H1 (cell line): ENCODE measurements at regions of chr11 and their contacts with region 1.

Region 1: GRCh38 chr11:75532200-75533048 is 6.7 kb upstream of the GDPD5 start:
- DNase-seq: peak in 1 of 2 experiments; percentile 92
- H3K4me3 ChIP-seq: peak overlapping the region in 3 of 4 experiments; percentile 5 to 43 (median 17); a peak in 1 of 8 replicates
- H3K27ac ChIP-seq: no peak overlapping the region
- H3K4me1 ChIP-seq: peaks cover 0 to 5% (median under 1%) of the 10 kb centered on the region in 4 experiments; a peak in 1 of 7 replicates
- H3K27me3 ChIP-seq: no peaks in the 10 kb centered on the region
- CTCF ChIP-seq: peak; percentile 63 to 88 (median 87)
- EP300 ChIP-seq: no peak
- POLR2A ChIP-seq: no peak
- RAD21 ChIP-seq: peak; percentile 92 to 95

Region 2: GRCh38 chr11:75280227-75280701 is 252.2 kb before region 1 on chr11:
- CTCF ChIA-PET with region 1: interaction called, 11 read pairs
- POLR2A ChIA-PET with region 1: no interaction called
- DNase-seq: peak; percentile 76 to 92
- H3K4me3 ChIP-seq: no peak overlapping the region
- H3K27ac ChIP-seq: no peak overlapping the region
- H3K4me1 ChIP-seq: peaks cover 0 to 6% (median 0%) of the 10 kb centered on the region in 4 experiments; a peak in 2 of 7 replicates
- H3K27me3 ChIP-seq: no peaks in the 10 kb centered on the region
- CTCF ChIP-seq: peak; percentile 94 to 100 (median 96)
- EP300 ChIP-seq: no peak
- POLR2A ChIP-seq: no peak
- RAD21 ChIP-seq: peak; percentile 98

Region 3: DNA sequence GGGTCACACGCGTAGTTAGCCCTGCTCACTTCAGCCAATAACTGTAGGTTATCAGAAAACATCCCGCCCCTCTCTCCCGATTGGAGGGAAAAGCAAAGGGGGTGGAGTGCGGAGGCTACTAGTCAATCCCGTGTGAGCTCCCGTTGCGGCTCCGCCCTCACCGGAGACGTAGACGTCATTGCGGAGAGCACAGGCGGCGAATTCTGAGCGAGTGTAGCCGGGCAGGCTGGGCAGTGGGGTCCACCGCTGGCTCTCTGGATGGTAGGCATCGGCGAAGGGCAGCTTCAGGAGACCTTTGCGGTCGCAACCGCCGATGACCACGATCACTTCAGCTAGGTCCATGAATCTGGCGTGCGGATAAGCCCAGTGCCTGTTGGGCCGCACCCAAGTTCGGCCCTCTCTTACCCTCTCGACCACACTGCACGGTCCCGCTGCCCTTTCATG is 104.1 kb before region 1 on chr11:
- CTCF ChIA-PET with region 1: interaction called, 20 read pairs
- POLR2A ChIA-PET with region 1: interaction called, 4 read pairs
- DNase-seq: no peak
- H3K4me3 ChIP-seq: no peak overlapping the region
- H3K27ac ChIP-seq: no peak overlapping the region
- H3K4me1 ChIP-seq: peaks cover 0 to 23% (median 15%) of the 10 kb centered on the region in 4 experiments; a peak in 6 of 7 replicates
- H3K27me3 ChIP-seq: peaks cover 47 to 66% (median 60%) of the 10 kb centered on the region in 4 experiments
- CTCF ChIP-seq: no peak
- EP300 ChIP-seq: no peak
- POLR2A ChIP-seq: no peak
- RAD21 ChIP-seq: no peak

Region 4: DNA sequence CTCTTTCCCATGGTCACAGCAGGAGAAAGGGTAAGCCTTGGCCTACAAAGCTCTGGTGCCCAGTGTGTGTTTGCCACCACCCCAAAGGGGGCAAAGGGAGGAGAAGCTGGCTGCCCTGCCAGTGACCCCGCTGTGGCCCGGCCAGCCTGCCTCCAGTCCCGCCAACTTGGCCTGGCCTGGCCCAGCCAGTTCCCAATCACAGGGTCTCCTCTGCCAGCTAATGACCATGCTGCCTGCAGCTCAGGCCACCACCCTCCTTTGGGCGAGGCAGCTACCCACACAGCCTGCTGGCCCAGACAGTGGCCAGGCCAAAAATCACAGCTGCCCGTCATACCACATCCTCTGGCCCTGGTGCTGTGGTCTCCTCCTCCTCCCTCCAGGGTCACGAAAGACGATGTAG is 11.7 kb before region 1 on chr11:
- CTCF ChIA-PET with region 1: interaction called, 70 read pairs
- POLR2A ChIA-PET with region 1: interaction called, 4 read pairs
- DNase-seq: no peak
- H3K4me3 ChIP-seq: no peak overlapping the region
- H3K27ac ChIP-seq: no peak overlapping the region
- H3K4me1 ChIP-seq: peaks cover 0 to 9% (median 1%) of the 10 kb centered on the region in 4 experiments; a peak in 2 of 7 replicates
- H3K27me3 ChIP-seq: peaks cover 14 to 31% (median 19%) of the 10 kb centered on the region in 4 experiments; a peak in 6 of 7 replicates
- CTCF ChIP-seq: no peak
- EP300 ChIP-seq: no peak
- POLR2A ChIP-seq: no peak
- RAD21 ChIP-seq: no peak

Region 5: GRCh38 chr11:75570559-75571139 is 38.2 kb after region 1 on chr11:
- CTCF ChIA-PET with region 1: interaction called, 41 read pairs
- POLR2A ChIA-PET with region 1: interaction called, 16 read pairs
- DNase-seq: no peak
- H3K4me3 ChIP-seq: no peak overlapping the region
- H3K27ac ChIP-seq: no peak overlapping the region
- H3K4me1 ChIP-seq: peaks cover 0 to 8% (median under 1%) of the 10 kb centered on the region in 4 experiments; a peak in 5 of 7 replicates
- H3K27me3 ChIP-seq: no peaks in the 10 kb centered on the region
- CTCF ChIP-seq: no peak
- EP300 ChIP-seq: no peak
- POLR2A ChIP-seq: peak in 1 of 2 experiments; percentile 23; a peak in 1 of 3 replicates
- RAD21 ChIP-seq: no peak